T-cell (primary cell): ENCODE measurements at regions of chr2 and their contacts with region 1.

Region 1: GRCh38 chr2:134118279-134119116 is 135.4 kb upstream of the MGAT5 start:
- DNase-seq: peak; percentile 57 to 89 (median 81)
- ATAC-seq: peak; percentile 17 to 43 (median 23)
- H3K4me3 ChIP-seq: no peak overlapping the region
- H3K4me3 Mint-ChIP-seq: peak overlapping the region; percentile 89 to 99 (median 98)
- H3K27ac ChIP-seq: no peak overlapping the region
- H3K27ac Mint-ChIP-seq: peak overlapping the region in 1 of 2 donors; percentile 98
- H3K4me1 ChIP-seq: peaks cover 28 to 40% of the 10 kb centered on the region in 2 experiments
- H3K4me1 Mint-ChIP-seq: peaks cover 34 to 39% (median 38%) of the 10 kb centered on the region in 3 donors
- H3K27me3 ChIP-seq: no peaks in the 10 kb centered on the region
- H3K27me3 Mint-ChIP-seq: peaks cover 0 to 3% of the 10 kb centered on the region in 2 donors

Region 2: DNA sequence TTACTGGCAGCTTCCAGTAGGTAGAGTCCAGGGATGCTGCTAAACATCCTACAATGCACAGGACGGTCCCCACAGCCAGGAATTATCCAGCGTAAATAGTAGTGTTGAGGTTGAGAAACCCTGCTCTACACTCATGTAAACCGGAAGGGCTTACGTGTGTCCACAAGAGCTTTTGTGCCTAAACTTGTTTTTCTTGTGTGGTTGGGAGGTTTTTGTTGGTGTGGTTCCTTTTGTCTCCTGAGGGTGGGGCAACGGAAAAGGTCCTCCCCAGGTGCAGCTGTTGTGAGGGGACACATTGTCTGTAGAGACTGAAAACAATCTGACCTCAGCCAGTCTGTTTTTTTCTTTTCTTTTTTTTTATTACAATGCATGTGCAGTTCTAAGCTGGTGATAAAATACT is 62.7 kb after region 1 on chr2:
- CTCF ChIA-PET with region 1: interaction called, 3 to 13 read pairs
- POLR2A ChIA-PET with region 1: interaction called in 1 of 2 experiments, 4 read pairs
- DNase-seq: peak; percentile 20 to 88 (median 59)
- ATAC-seq: peak; percentile 86 to 91 (median 89)
- H3K4me3 ChIP-seq: no peak overlapping the region
- H3K4me3 Mint-ChIP-seq: peak overlapping the region; percentile 50 to 56 (median 55)
- H3K27ac ChIP-seq: peak overlapping the region; percentile 65
- H3K27ac Mint-ChIP-seq: peak overlapping the region; percentile 92 to 95
- H3K4me1 ChIP-seq: peaks cover 30 to 55% of the 10 kb centered on the region in 2 experiments
- H3K4me1 Mint-ChIP-seq: peaks cover 92 to 94% (median 94%) of the 10 kb centered on the region in 3 donors
- H3K27me3 ChIP-seq: no peaks in the 10 kb centered on the region
- H3K27me3 Mint-ChIP-seq: no peaks in the 10 kb centered on the region

Region 3: GRCh38 chr2:134207564-134208209 is 89.2 kb after region 1 on chr2:
- CTCF ChIA-PET with region 1: interaction called, 68 to 92 read pairs
- POLR2A ChIA-PET with region 1: no interaction called
- DNase-seq: peak; percentile 24 to 80 (median 62)
- ATAC-seq: peak; percentile 67 to 94 (median 80)
- H3K4me3 ChIP-seq: no peak overlapping the region
- H3K4me3 Mint-ChIP-seq: no peak overlapping the region
- H3K27ac ChIP-seq: no peak overlapping the region
- H3K27ac Mint-ChIP-seq: peak overlapping the region; percentile 74 to 77
- H3K4me1 ChIP-seq: peaks cover 25 to 26% of the 10 kb centered on the region in 2 experiments
- H3K4me1 Mint-ChIP-seq: peaks cover 4 to 11% (median 9%) of the 10 kb centered on the region in 3 donors
- H3K27me3 ChIP-seq: no peaks in the 10 kb centered on the region
- H3K27me3 Mint-ChIP-seq: no peaks in the 10 kb centered on the region

Region 4: GRCh38 chr2:134245340-134245984 is 127.0 kb after region 1 on chr2:
- CTCF ChIA-PET with region 1: interaction called, 15 to 76 read pairs
- POLR2A ChIA-PET with region 1: no interaction called
- DNase-seq: peak; percentile 45 to 84 (median 71)
- ATAC-seq: peak; percentile 33 to 61 (median 41)
- H3K4me3 ChIP-seq: no peak overlapping the region
- H3K4me3 Mint-ChIP-seq: peak overlapping the region in 2 of 3 donors; percentile 26 to 37
- H3K27ac ChIP-seq: peak overlapping the region; percentile 13
- H3K27ac Mint-ChIP-seq: peak overlapping the region; percentile 50 to 82
- H3K4me1 ChIP-seq: peaks cover 50 to 64% of the 10 kb centered on the region in 2 experiments
- H3K4me1 Mint-ChIP-seq: peaks cover 87 to 95% (median 94%) of the 10 kb centered on the region in 3 donors
- H3K27me3 ChIP-seq: no peaks in the 10 kb centered on the region
- H3K27me3 Mint-ChIP-seq: no peaks in the 10 kb centered on the region

Region 5: GRCh38 chr2:134451347-134451630 is 332.8 kb after region 1 on chr2:
- CTCF ChIA-PET with region 1: interaction called, 7 to 11 read pairs
- POLR2A ChIA-PET with region 1: no interaction called
- DNase-seq: no peak
- ATAC-seq: no peak
- H3K4me3 ChIP-seq: no peak overlapping the region
- H3K4me3 Mint-ChIP-seq: no peak overlapping the region
- H3K27ac ChIP-seq: no peak overlapping the region
- H3K27ac Mint-ChIP-seq: peak overlapping the region in 1 of 2 donors; percentile 24
- H3K4me1 ChIP-seq: no peaks in the 10 kb centered on the region
- H3K4me1 Mint-ChIP-seq: peaks cover 0 to 2% (median 0%) of the 10 kb centered on the region in 3 donors
- H3K27me3 ChIP-seq: no peaks in the 10 kb centered on the region
- H3K27me3 Mint-ChIP-seq: no peaks in the 10 kb centered on the region